Left ventricle myocardium superior (tissue), 1 donor: ENCODE measurements at regions of chr1 and their contacts with region 1.

Region 1: GRCh38 chr1:180435566-180435965 is 66.8 kb downstream of the ACBD6 start:
- DNase-seq: no peak
- ATAC-seq: no peak

Region 2: GRCh38 chr1:180287988-180288705 is 147.4 kb before region 1 on chr1:
- intact Hi-C with region 1: loop called (anchors 10 kb)
- DNase-seq: peak; percentile 56
- ATAC-seq: peak; percentile 54

Region 3: DNA sequence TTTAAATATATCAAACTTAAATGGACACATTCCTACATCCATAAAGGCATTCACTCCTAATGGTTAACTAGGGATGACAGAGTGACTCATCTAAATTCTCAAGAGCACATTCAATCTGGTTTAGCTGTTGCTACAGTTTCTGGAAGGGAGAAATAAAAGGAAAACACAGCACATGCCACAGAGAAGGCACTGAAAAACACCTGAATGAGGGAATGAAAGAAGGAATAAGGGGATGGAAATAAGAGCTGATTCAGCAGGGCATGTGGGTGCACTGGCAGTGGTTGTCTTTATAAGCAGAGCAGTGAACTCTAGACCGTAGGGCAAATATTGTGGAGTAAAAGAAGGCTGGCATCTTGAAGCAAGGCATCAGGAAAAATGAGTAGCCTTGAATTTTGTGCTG is 126.2 kb before region 1 on chr1:
- intact Hi-C with region 1: no loop called
- DNase-seq: no peak
- ATAC-seq: no peak

Region 4: DNA sequence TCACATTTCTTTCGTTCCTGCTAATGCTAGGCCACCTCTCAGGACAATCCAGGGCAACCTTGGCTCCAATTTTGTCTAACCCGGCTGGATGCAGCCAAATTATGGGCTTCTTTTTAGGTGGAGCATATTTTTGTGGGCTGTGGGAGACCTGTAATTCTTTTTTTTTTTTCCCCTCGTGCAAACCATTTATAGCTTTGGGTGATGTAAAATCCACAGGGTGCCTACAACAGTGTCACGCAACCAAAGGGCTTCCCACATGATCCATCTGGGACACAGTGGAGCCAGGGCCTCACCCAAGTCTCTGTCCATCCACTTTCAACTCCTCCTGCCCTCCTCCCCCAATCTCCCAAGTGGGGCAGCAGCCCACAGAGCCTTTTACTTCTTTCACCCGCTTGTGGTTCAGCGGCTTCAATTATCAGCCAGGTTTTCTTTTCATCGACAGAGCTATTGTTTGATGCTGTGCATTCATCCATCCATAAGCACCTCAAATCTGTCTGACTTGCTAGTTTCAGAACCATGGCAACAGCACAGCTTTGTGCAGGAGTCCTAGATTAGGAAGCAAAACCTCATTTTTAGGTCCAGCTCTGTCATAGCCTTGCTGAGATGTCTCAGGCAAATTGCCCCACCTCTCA is 113.2 kb after region 1 on chr1:
- intact Hi-C with region 1: no loop called
- DNase-seq: no peak
- ATAC-seq: no peak

Region 5: DNA sequence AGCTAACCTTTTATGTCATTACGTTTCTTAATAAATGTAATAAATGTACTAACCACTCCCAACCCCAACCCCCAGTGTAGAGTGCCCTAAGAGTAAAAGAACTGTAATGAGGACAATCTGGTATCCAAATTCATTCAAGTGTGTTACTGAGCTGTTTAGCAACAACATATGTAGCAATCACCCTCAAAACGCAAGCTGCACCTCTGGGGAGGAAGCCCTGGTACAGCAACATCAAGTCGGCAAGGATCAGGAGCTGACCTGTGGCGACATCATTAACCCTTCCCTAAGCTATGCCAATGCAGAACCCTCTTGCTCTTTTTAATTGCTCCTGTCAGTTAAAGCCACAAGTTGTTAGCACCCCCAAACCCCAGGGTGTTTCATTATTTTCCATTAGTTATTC is 540.0 kb after region 1 on chr1:
- intact Hi-C with region 1: no loop called
- DNase-seq: no peak
- ATAC-seq: no peak